Calu3 (cell line): ENCODE measurements at regions of chr14 and their contacts with region 1.

Region 1: DNA sequence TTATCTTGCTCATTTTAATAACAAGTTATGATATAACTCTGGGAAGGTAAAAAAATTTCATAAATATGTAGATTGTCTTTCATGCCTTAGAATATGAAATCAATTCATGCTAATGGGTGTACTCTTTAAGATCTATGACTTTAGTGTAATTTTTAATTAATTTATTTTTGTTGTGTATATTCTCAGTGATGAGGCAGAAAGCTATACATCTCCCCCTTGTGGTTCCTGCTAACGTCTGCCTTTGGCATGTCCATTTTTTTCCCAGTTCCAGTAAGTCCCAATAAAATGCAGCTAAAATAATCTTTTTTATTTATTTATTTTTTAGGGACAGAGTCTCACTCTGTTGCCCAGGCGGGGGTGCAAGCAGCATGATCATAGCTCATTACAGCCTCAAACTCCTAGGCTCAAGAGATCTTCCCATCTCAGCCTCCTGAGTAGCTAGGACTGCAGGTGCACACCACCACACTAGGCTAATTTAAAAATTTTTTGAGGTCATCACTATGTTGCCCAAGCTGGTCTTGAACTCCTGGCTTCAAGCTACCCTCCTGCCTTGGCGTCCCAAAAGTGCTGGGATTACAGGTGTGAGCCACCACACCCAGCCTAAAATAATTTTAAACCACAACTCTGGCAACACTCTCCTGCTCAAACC is 3.3 kb upstream of the CHURC1 start:
- DNase-seq: peak; percentile 25
- H3K4me3 Mint-ChIP-seq: no peak overlapping the region
- H3K27ac Mint-ChIP-seq: no peak overlapping the region
- H3K4me1 Mint-ChIP-seq: peaks cover 11% of the 10 kb centered on the region
- H3K27me3 Mint-ChIP-seq: peaks cover 19% of the 10 kb centered on the region
- CTCF ChIP-seq: peak; percentile 28

Region 2: GRCh38 chr14:64823305-64823861 is 87.6 kb before region 1 on chr14:
- CTCF ChIA-PET with region 1: interaction called, 12 read pairs
- intact Hi-C with region 1: no loop called
- DNase-seq: peak; percentile 86
- H3K4me3 Mint-ChIP-seq: peak overlapping the region; percentile 36
- H3K27ac Mint-ChIP-seq: no peak overlapping the region
- H3K4me1 Mint-ChIP-seq: peaks cover 8% of the 10 kb centered on the region
- H3K27me3 Mint-ChIP-seq: peaks cover 92% of the 10 kb centered on the region
- CTCF ChIP-seq: peak; percentile 76

Region 3: GRCh38 chr14:64937821-64938193 is 26.8 kb after region 1 on chr14:
- CTCF ChIA-PET with region 1: interaction called, 3 read pairs
- intact Hi-C with region 1: loop called (anchors 1 kb)
- DNase-seq: no peak
- H3K4me3 Mint-ChIP-seq: peak overlapping the region; percentile 76
- H3K27ac Mint-ChIP-seq: peak overlapping the region; percentile 92
- H3K4me1 Mint-ChIP-seq: peaks cover 54% of the 10 kb centered on the region
- H3K27me3 Mint-ChIP-seq: no peaks in the 10 kb centered on the region
- CTCF ChIP-seq: no peak

Region 4: GRCh38 chr14:65084554-65085505 is 173.9 kb after region 1 on chr14:
- CTCF ChIA-PET with region 1: interaction called, 12 read pairs
- intact Hi-C with region 1: no loop called
- DNase-seq: no peak
- H3K4me3 Mint-ChIP-seq: no peak overlapping the region
- H3K27ac Mint-ChIP-seq: no peak overlapping the region
- H3K4me1 Mint-ChIP-seq: no peaks in the 10 kb centered on the region
- H3K27me3 Mint-ChIP-seq: no peaks in the 10 kb centered on the region
- CTCF ChIP-seq: no peak